ENCODE measurements at regions of chr12 and their contacts with region 1.

Region 1: DNA sequence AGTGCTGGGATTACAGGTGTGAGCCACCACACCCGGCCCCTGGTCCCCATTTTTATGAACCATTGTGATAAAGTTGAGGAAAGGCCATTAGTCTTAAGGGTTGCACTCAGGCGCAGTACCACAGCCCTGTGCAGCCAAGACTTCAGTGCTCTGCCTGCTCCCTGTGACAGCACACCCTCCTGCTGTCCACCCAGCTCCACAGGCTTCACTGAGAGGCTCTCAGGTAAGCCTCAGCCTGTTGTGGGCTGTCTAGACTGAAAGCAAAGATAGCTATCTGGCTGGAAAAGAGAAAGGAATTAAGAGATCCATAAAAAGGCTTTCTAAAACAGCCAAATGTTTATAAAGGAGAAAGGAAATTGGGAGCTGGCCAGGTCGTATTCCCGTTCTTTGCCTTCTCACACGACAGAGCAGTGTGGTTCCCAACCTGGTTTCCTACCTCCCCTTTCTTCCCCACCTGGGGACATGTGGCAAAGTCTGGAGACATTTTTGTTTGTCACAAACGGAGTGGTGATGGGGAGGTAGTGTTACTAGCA is 19.1 kb upstream of the DNM1L start:
- DNase-seq: no peak
- H3K4me3 ChIP-seq: no peak overlapping the region
- H3K27ac ChIP-seq: peak overlapping the region in 2 of 5 donors; percentile 17 to 61
- H3K4me1 ChIP-seq: peaks cover 0 to 4% of the 10 kb centered on the region in 2 donors
- H3K27me3 ChIP-seq: no peaks in the 10 kb centered on the region
- CTCF ChIP-seq: no peak
- POLR2A ChIP-seq: no peak

Region 2: DNA sequence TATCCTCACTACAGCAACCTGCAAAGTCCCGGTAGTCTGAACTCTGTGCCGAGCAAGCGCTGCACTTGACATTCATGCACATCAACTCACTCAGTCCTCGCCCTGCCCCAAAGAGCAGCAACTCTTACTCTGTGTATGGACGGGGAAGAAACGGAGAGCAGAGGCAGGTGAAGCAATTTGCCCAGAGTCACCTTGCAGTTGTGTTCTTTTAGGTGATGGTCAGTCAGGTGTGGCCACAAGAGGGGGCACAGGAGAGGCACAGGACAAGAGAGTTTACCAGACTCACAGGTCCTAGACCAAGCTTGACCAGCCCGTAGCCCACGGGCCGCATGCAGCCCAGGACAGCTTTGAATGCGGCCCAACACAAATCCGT is 1694.4 kb before region 1 on chr12:
- intact Hi-C with region 1: no loop called
- DNase-seq: no peak
- H3K4me3 ChIP-seq: no peak overlapping the region
- H3K27ac ChIP-seq: no peak overlapping the region
- H3K4me1 ChIP-seq: no peaks in the 10 kb centered on the region
- H3K27me3 ChIP-seq: no peaks in the 10 kb centered on the region
- CTCF ChIP-seq: no peak
- POLR2A ChIP-seq: no peak

Region 3: GRCh38 chr12:32365473-32366064 is 294.4 kb before region 1 on chr12:
- intact Hi-C with region 1: loop called (anchors 10 kb)
- DNase-seq: peak; percentile 42 to 78 (median 53)
- H3K4me3 ChIP-seq: no peak overlapping the region
- H3K27ac ChIP-seq: no peak overlapping the region
- H3K4me1 ChIP-seq: no peaks in the 10 kb centered on the region
- H3K27me3 ChIP-seq: no peaks in the 10 kb centered on the region
- CTCF ChIP-seq: peak; percentile 56 to 85 (median 76)
- POLR2A ChIP-seq: no peak

Region 4: DNA sequence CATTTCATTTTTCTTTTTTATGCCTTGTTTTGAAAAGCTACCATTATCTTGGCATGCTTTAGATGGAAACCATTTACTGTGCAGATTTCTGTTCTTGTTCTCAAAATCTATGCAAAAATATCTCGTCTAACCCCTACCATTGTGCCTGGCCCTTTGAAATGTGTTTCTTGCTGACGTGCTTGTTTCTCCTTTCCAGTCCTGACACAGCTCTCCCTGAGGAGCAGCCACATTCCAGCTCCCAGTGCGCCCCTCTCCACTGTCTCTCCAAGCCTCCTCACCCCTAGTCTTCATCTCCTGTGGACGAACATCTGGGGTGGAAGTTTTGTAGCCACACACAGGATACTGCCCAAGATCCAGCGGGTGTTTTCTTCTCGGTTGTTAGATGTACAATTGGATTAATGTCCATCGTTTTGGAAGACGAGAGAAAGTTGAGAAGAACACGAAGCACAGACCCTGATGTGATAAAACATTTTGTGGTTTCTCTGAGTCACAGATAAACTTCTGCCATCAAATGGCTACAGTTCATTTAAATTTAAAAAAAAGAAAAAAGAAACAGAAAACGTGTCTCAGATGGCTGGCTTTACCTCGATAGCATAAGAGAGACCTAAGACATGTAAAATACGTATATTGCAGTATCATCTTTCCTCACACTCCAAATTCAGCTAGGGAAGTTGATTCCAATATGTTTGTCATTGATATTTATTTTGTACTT is 282.5 kb before region 1 on chr12:
- intact Hi-C with region 1: loop called in 1 of 2 experiments (anchors 10 kb)
- DNase-seq: no peak
- H3K4me3 ChIP-seq: no peak overlapping the region
- H3K27ac ChIP-seq: no peak overlapping the region
- H3K4me1 ChIP-seq: no peaks in the 10 kb centered on the region
- H3K27me3 ChIP-seq: no peaks in the 10 kb centered on the region
- CTCF ChIP-seq: no peak
- POLR2A ChIP-seq: no peak

Region 5: DNA sequence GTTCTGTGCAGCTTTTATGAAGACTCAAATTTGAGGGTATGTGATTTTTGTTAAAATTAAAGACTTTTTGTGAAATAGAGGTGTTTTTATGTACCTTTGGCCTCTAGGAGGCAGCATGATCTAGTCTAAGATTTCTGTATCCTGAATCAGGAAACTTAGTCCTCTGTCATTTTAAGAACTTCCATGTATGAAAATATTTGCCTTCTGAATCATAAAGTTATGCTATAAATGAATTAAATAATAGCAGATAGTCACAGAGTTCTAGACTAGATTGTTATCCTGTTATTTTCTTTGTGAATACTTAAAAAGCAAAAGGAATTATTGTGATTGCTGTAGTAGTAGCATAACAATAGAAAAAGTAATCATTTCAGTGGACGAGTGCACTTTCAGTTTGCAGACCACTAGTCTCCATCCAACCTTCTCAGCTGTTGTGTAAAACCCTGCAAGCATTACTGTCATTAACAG is 204.3 kb before region 1 on chr12:
- intact Hi-C with region 1: loop called (anchors 5 to 10 kb)
- DNase-seq: peak in 4 of 7 donors; percentile 34 to 54 (median 40)
- H3K4me3 ChIP-seq: peak overlapping the region in 3 of 4 donors; percentile 12 to 53 (median 35)
- H3K27ac ChIP-seq: peak overlapping the region in 3 of 5 donors; percentile 10 to 48 (median 25)
- H3K4me1 ChIP-seq: peaks cover 8 to 22% of the 10 kb centered on the region in 2 donors
- H3K27me3 ChIP-seq: no peaks in the 10 kb centered on the region
- CTCF ChIP-seq: peak; percentile 66 to 82 (median 76)
- POLR2A ChIP-seq: no peak

Region 6: GRCh38 chr12:32727237-32727636 is 67.3 kb after region 1 on chr12:
- intact Hi-C with region 1: no loop called
- DNase-seq: no peak
- H3K4me3 ChIP-seq: no peak overlapping the region
- H3K27ac ChIP-seq: no peak overlapping the region
- H3K4me1 ChIP-seq: no peaks in the 10 kb centered on the region
- H3K27me3 ChIP-seq: no peaks in the 10 kb centered on the region
- CTCF ChIP-seq: no peak
- POLR2A ChIP-seq: no peak